ENCODE measurements at regions of chr3 and their contacts with region 1.

Region 1: GRCh38 chr3:114624571-114625181 is 330.8 kb downstream of the TIGIT start:
- DNase-seq: peak; percentile 97

Region 2: DNA sequence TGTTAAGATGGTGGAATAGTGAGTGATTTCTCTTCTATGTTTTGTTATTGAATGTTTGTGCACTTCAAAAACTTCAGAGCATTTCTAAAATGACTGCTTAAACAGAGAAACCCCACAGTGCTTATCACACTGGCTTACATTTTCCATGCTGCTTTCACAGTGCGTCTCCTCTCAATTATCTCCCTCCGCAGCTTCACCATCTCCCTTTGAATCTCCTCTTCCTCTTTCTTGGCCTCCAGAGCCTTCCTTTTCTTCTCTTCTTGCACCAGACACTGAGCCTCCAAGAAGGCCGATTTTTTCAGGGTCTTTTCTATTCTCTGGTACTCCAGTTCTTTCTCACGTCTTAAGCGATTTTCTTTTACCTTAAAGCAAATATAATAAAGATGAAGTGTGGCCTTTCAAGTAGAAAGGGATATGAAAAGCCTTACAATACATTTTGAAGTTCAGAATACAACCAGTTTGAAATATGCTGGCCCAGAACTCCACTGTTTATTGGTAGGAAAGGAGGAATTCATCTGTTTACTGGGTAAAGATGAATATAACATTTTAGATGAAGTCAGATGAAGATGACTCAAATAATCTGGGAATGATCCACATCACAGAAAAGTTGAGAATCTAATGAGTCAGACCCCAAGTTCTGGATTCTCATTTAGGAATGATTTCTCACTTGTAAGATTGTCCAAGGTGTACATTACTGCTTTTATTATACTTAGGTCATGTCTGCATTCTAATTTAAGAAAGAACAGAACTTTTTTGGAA is 589.7 kb before region 1 on chr3:
- intact Hi-C with region 1: no loop called
- DNase-seq: no peak

Region 3: DNA sequence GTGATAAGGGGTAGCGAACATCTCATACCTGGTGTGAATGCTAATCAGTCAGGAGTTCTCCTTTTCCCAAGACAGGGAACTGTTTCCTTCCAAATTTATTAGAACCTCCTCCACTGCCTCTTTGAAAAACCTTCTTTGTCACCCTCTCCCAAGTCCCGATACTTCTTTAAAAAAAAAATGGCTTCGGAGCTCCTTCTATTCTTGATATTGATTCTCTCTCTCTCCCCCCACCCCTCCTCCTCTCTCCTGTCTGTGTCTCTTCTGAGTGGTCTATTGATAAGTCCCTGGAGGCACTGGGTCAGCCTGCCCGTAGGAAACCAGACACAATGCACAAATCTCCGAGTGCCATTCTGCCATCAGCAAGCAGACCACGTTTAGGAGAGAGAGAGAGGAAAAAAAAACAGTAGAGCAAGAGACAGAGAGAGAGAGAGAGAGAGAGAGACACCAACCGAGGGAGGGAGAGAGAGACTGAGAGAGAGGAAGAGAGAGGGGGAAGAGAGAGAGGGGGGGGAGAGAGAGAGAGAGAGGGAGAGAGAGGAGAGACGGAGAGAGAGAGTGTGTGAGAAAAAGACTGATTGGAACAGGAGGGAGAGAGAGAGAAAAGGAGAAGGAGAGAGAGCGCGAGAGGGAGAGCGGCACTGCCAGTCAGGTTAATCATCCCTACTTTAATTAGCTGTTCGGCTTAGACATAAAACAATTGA is 170.0 kb before region 1 on chr3:
- intact Hi-C with region 1: loop called (anchors 5 kb)
- DNase-seq: no peak

Region 4: GRCh38 chr3:114582929-114583328 is 41.7 kb before region 1 on chr3:
- intact Hi-C with region 1: loop called (anchors 5 kb)
- DNase-seq: no peak

Region 5: DNA sequence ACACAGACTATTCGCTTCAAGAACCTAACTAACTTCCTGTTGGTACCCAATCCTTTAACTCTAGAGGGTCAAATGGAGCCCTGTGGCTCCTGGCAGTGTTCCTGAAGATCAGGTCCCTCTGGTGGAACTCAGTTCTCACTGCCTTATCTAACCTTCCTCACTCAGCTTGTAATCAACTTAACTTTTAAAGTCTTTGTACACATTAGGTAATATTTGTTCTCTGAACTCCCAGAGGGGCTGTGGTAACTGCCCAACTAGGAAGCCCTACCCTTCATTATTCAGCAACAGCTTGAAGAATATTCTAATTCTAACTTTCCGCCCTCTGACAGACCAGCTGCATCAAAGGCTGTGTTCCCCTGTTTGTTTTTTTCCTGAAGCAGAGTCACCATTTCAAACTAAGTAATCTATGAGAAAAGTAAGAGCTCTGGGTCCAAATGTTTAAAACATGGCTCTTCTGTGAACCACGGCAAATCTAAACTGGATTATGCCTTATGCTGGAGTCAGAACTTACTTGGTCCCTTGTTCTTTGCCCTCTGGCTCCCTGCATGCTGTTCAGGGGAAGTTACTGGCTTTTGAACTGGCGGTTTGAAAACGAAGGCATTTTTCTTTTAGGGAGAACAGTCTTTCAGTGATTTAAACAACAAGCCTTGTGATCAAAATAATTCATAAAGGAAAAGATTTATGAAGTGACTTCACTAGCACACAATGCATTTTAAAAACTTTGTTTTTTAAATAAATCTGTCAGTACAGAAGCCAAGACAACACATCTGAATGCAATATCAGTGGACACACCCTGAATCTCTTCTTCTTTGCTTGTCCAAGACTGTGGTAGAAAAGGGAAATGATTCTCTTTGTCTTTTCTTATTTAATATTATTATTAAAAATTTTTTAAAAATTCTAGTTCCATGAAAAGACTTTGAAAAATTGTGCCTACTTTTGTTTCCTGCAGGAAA is 34.7 kb after region 1 on chr3:
- intact Hi-C with region 1: loop called (anchors 5 kb)
- DNase-seq: no peak

Region 6: DNA sequence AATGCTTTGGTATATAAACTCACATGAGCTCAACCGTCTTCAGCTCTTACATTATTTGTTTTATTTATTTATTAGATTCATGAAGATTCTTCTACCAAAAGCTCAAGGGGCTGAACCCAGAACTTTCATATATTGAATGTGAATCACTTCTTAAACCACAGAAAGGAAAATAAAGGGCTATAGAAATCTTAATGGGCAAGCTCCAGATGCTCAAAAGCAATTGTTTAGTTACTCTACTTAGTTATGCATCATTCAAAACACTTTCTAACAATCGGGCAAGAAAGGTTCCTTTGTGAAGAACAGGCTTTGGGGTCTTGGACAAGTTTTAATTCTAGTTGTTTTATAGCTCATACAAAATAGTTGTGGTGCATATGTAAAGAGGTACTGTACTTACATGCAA is 49.4 kb after region 1 on chr3:
- intact Hi-C with region 1: no loop called
- DNase-seq: no peak

Region 7: DNA sequence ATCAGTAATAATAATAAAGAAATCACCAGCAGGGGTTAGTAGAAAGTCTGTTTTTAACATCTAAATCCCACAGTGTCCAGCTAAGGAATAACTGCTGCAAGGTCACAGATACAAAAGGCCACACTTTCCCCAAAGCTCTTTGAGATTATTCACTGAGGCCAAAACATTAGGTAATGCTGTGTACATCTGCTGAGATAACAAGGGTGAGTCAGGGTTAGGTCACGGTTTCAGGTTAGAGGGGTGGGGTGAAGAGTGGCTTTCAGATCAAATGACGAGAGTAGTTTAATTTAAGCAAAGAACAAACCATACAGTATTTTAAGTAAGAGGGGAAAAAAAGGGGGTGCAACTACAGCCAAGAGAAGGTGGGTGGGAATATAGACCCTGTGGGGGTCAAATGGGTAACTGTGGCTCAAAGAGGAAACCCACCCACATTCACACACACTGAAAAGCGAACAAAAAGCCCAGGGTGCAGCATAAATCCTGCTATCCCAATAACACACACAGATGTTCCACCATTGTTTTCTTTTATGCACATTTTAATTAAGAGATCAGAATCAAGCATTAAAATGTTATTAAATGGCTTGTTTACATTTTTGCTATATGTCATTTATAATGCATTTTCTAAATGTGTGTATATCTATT is 82.0 kb after region 1 on chr3:
- intact Hi-C with region 1: loop called (anchors 5 kb)
- DNase-seq: no peak

Region 8: DNA sequence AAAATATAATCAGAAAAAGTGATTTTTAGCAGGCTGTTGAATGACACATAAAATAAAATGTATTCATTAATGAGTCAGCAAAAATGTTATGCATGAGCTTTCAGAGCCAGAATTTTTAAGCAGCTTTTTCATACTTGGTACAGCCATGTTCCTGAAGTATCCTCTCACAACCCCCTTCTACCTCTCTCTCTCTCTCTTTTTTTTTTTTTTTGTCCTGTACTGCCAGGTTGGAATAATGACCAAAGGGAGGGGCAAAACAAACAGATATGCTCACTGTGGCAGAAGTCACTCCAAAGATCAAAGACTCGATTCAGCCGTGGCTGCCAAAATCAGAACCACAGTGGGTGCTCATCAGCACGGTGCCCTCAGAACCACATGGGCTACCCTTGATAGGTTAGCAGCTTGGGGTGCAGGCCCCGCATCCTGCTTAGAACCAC is 139.4 kb after region 1 on chr3:
- intact Hi-C with region 1: no loop called
- DNase-seq: no peak

Region 9: DNA sequence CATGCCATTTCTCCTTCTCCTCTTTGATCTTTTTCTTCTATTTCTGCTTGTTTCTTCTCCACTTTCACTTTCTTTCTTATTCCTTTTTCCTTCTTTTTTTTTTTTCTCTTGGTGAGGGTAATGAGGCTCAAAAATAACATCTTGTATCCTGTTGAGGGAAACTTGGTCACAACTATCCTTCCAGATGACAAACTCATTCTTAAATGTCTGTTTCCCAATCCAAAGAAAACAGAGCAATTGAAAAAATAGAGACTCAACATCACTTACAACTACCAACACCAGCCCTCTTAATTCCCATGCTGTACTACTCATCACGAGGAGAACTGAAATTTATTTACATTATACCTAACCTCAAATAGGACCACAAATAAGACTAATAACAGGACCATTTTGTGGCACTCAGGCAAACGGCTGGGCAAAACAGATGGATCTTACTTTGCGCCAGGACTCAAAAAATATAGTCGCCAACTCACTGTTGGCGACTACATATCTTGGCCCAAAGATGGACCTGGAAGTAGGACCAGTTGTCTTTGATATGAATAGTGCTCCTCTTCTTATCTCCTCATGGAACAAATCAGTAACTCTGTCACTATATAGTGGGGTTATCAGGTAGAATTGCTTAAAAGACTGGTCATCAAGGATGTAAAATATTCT is 178.5 kb after region 1 on chr3:
- intact Hi-C with region 1: loop called (anchors 5 kb)
- DNase-seq: no peak